Sciatic nerve (tissue), 2 donors: ENCODE measurements at regions of chr1 and their contacts with region 1.

Region 1: DNA sequence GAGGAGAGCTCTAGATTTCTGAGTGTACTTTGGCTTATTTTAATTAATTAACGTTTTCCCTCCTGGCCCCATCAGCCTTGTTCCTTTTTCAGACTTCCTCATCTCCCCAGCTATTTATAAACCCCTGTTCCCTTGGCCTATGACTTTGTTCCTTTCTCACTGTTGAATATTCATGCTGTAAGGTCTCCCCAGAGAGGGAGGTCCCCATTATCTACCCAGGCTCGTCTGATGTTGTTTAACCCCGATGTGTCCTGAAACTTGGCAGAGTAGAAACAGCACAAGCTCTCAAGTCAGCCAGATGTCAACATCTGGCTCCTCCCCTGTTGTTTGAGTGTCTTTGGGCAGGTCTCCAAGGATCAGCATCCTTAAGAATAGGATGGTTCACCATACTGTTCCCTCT is 153.6 kb downstream of the HIVEP3 start:
- DNase-seq: no peak
- ATAC-seq: peak; percentile 43

Region 2: DNA sequence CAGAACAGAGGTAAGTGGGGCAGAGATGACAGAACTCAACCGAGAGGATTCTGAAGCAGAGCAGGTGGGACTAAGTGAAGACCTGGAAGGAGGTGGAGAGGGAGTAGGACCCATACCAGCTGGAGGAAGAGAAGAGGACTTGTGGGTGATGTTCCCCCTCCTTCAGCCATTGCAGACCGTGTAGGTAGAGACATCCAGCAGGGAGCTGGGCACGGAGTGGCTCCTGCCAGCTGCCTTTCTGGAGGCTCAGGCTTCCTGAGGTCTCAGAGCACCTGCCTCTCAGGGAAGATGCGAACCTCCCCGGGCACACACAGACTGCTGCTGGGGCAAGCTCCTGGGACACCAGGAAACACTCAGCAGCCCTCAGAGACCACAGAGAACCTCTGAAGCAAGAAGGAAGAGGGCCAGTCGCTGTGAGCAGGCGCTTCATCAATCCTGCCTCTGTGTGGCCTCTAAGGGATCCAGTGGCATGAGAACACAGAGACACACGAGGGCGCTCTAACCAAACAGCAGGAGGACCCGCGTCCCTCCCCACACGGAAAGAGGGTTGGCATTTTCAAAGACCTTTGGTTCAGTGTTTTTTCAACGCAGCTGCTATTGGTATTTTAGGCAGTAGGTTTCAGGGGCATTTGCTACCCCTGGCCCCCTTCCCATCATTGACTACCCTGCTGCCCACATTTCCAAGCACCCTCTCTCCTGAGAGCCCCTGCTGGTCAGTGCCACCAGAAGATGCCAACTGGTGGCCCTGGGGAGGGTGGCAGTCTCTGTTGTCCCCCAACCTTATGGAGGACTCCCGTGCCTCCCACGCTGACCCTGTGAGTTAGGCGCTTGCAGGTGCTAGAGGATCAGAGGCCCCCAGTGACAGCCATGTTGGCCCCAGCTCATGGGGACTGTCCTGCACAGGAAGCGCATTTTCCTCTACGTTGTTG is 191.1 kb before region 1 on chr1:
- intact Hi-C with region 1: loop called (anchors 10 kb)
- DNase-seq: peak; percentile 93
- ATAC-seq: peak; percentile 94